BJ (cell line): ENCODE measurements at regions of chr14 and their contacts with region 1.

Region 1: GRCh38 chr14:24332268-24332993 is 2.4 kb downstream of the ADCY4 start:
- DNase-seq: no peak
- H3K4me3 ChIP-seq: no peak overlapping the region
- H3K27me3 ChIP-seq: no peaks in the 10 kb centered on the region
- CTCF ChIP-seq: peak; percentile 84

Region 2: DNA sequence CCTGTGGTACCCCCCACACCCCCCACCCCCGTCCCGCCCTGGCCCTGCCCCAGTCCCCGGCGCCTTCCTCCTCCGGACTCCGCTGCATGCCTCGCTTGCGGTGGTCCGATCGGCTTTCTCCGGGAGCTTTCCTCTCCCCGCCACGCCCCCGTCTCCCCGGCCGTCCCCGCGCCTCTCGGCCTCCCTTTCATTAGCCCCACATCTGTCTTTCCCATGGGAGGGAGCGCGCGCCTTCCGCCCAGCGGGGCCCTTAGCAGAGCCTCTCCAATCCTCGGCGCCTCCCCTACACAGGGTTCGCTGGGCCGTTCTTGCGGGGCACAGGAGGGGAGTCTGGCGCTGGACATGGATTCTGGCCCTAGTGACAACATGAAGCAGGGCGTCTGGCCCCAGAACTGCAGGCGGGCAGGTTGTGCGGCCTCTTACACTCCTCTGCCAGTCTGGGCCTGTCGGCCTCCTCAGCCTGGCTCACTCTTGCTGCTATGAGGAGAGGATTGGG is 966.0 kb before region 1 on chr14:
- CTCF ChIA-PET with region 1: no interaction called
- POLR2A ChIA-PET with region 1: no interaction called
- DNase-seq: no peak
- H3K4me3 ChIP-seq: peak overlapping the region; percentile 37
- H3K27me3 ChIP-seq: peaks cover 18% of the 10 kb centered on the region
- CTCF ChIP-seq: no peak

Region 3: GRCh38 chr14:24317141-24317928 is 15.1 kb before region 1 on chr14:
- CTCF ChIA-PET with region 1: interaction called, 60 read pairs
- POLR2A ChIA-PET with region 1: no interaction called
- DNase-seq: no peak
- H3K4me3 ChIP-seq: no peak overlapping the region
- H3K27me3 ChIP-seq: no peaks in the 10 kb centered on the region; the same call in 1 of the 2 replicates
- CTCF ChIP-seq: no peak

Region 4: DNA sequence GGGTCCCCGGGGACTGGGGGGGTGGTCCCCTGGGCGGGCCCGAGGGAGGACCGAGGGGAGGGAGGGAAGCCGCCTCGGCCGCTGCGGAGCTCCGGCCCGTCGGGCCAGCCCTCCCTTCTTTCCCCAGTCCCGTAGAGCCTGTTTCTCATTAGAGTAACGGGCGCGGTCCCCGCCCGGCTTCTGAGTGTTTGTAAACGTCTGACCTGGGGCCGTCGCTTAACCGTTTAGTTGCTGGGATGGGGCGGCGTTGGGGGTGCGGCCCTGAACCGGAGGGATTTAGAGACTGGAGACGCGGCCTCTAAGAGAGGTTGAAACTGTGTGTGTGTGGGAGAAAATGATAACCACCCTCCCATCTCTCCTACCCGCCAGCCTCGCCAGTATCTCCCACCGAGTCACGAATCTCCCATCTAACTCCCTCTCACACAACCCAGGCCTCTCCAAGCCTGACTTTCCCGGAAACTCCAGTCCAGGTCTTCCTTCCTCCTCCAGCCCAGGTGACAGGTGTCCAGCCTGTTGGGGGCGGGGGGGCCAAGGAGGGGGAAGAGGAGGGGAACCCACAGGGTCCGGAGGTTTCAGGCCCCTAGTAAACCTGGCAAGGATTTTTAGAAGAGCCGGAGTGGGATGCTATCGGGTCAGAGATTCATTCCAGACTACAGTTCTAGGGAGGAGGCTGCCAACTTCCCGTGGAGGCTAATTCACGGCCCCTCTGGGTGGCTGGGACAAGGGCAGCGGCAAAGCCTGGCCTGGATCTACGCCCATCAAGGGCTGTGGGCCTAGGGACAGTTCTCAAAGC is 34.5 kb after region 1 on chr14:
- CTCF ChIA-PET with region 1: interaction called, 51 read pairs
- POLR2A ChIA-PET with region 1: interaction called, 4 read pairs
- DNase-seq: peak; percentile 80
- H3K4me3 ChIP-seq: peak overlapping the region; percentile 51
- H3K27me3 ChIP-seq: no peaks in the 10 kb centered on the region
- CTCF ChIP-seq: no peak

Region 5: DNA sequence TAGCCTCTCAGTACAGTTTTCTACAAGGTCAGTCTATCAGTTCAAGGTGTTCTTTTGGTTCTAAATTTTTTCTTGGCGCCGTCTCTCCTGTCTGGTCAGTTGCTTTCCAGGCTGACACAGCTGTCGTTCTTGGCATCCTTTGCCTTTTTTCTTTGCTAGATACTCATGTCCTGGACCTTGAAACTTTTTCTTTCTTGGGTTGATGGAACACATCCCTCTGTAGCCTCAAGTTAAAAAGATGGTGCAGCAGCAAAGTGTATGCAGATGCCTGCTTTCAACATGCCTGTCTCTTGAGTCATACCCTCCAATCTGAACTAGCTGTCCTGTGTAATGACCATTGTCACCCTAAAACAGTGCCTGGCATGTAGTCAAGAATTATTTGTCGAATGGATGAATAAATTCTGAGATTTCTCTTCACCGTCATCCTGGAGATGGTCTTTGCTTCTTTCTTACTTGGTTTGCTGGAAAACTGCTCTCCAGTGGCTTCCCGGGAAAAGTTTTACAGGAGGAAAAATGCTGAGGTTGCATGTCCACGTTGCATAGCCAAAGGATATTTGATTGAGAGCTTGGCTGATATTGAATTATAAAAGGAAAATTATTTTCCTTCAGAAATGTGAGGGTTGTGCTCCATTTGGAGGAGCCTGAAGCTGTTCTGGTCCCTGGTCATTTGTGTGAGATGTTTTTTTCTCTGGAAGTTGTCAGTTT is 71.0 kb after region 1 on chr14:
- CTCF ChIA-PET with region 1: interaction called, 107 read pairs
- POLR2A ChIA-PET with region 1: no interaction called
- DNase-seq: no peak
- H3K4me3 ChIP-seq: no peak overlapping the region
- H3K27me3 ChIP-seq: no peaks in the 10 kb centered on the region; the same call in 1 of the 2 replicates
- CTCF ChIP-seq: no peak

Region 6: GRCh38 chr14:24418492-24418873 is 86.1 kb after region 1 on chr14:
- CTCF ChIA-PET with region 1: interaction called, 107 read pairs
- POLR2A ChIA-PET with region 1: no interaction called
- DNase-seq: no peak
- H3K4me3 ChIP-seq: no peak overlapping the region
- H3K27me3 ChIP-seq: peaks cover 2% of the 10 kb centered on the region; the same call in 1 of the 2 replicates
- CTCF ChIP-seq: no peak

Region 7: DNA sequence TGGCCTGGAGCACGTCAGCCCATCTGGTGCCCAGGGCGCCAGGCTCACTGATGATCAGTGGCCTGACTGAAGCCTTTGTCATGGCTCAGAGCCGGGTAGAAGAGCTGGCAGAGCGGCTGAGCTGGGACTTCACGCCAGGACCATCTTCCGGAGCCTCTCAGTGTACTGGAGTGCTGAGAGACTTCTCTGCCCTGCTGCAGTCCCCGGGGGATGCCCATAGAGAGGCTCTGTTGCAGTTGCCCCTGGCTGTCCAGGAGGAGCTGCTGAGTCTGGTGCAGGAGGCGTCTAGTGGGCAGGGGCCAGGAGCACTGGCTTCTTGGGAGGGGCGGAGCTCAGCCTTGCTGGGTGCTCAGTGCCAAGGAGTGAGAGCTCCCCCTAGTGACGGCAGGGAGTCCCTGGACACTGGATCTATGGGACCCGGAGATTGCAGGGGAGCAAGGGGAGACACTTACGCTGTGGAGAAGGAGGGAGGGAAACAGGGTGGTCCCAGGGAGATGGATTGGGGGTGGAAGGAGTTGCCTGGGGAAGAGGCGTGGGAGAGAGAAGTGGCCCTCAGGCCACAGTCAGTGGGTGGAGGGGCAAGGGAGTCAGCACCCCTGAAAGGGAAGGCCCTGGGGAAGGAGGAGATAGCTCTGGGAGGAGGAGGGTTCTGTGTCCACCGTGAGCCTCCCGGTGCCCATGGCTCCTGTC is 99.3 kb after region 1 on chr14:
- CTCF ChIA-PET with region 1: interaction called, 491 read pairs
- POLR2A ChIA-PET with region 1: interaction called, 9 read pairs
- DNase-seq: peak; percentile 40
- H3K4me3 ChIP-seq: peak overlapping the region; percentile 58
- H3K27me3 ChIP-seq: no peaks in the 10 kb centered on the region
- CTCF ChIP-seq: peak; percentile 96